Naive thymus-derived CD4-positive, alpha-beta T cell (primary cell): ENCODE measurements at regions of chr17 and their contacts with region 1.

Region 1: DNA sequence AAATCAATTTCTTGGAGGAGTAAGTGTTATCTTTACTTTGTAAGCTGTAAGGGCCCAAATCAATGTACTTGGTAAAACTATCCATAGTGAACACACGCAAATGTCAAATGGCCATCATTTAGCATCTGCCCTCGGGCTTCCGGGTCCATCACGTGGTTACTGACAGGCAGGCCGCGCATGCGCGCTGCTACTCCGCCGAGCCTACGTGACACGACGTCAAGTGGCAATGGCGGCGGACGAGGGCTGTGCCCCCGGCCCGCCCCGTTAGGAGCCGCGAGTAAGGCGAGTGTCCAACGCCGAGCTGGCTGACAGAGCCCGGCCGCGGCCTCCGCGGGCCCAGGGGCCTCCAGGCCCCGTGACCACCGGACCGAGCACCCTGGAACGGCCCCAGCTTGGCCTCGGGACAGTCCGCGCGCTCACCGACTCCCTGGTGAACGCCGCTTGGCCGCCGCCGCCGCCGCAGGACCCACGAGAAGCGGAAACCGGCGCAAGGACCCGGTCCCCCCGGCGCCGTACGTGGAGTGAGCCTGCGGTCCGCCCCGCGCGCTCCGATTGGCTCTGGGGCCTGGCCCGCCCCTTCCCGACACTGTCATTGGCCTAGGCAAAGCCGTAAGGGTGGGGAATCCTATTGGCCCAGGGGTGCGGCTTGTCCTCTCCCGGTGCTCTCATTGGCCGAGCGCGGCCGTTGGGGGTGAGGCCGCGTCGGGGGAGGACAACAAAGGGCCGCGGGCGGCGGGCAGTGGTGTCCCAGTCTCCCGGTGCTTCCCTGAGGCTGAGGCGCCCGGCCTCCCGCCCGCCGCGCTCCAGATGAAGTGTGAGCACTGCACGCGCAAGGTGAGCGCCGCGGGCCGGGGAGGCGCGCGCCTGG is at the start of gene NARF:
- DNase-seq: peak; percentile 89 to 97 (median 97)
- ATAC-seq: peak; percentile 98
- H3K4me3 ChIP-seq: peak within 1 kb of the TSS; percentile 75
- H3K4me3 Mint-ChIP-seq: peak within 1 kb of the TSS; percentile 85 to 94 (median 88)
- H3K27ac ChIP-seq: peak within 1 kb of the TSS; percentile 97
- H3K27ac Mint-ChIP-seq: peak within 1 kb of the TSS; percentile 96 to 99 (median 98)
- H3K4me1 ChIP-seq: peaks cover 20% of the 10 kb centered on the region in 2 donors
- H3K4me1 Mint-ChIP-seq: peaks cover 22 to 47% (median 30%) of the 10 kb centered on the region in 7 donors
- H3K27me3 ChIP-seq: no peaks in the 10 kb centered on the region
- H3K27me3 Mint-ChIP-seq: no peaks in the 10 kb centered on the region
- total RNA-seq, gene NARF: 59.8 to 188 (median 67.1) TPM

Region 2: DNA sequence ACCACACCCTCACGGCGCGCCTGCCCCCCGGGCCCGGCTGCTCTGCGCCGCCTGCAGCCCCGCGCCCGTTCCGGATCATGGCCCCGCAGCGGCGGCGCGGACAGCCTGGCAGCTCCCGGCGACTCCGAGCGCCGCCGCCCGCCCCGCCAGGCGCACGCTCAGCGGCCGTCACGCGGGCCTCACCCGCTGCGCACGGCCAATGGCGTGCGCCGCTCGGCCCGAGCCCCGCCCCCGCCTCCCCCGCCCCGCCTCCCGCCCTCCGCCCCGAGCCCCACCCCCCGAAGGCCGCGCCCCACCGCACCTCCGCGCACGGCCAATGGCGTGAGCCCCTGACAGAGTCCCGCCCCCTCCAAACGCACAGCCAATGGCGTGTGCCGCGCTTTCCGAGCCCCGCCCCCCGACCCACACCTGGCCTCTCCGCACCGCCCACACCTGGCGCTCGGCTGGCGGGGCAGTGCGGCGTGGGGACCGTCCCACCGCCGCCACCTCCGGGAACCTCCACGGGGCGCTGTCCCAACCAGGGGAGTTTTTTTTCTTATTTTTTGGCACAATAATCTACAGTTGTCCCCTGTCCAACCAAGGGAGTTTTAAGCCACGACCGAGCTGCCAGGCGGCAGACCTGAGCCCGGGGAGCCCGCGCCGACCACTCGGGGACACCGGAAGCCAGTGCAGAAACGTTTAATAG is 546.8 kb before region 1 on chr17 and contains the start of gene PCYT2:
- CTCF ChIA-PET with region 1: no interaction called
- POLR2A ChIA-PET with region 1: no interaction called
- intact Hi-C with region 1: loop called in 1 of 2 experiments (anchors 5 kb)
- DNase-seq: peak; percentile 84 to 95 (median 92)
- ATAC-seq: peak; percentile 97
- H3K4me3 ChIP-seq: peak within 1 kb of the TSS; percentile 70
- H3K4me3 Mint-ChIP-seq: peak within 1 kb of the TSS; percentile 72 to 92 (median 86)
- H3K27ac ChIP-seq: peak within 1 kb of the TSS; percentile 68
- H3K27ac Mint-ChIP-seq: peak within 1 kb of the TSS in 6 of 9 donors; percentile 33 to 85 (median 54)
- H3K4me1 ChIP-seq: peaks cover 8 to 12% of the 10 kb centered on the region in 2 donors
- H3K4me1 Mint-ChIP-seq: peaks cover 6 to 33% (median 16%) of the 10 kb centered on the region in 7 donors
- H3K27me3 ChIP-seq: no peaks in the 10 kb centered on the region
- H3K27me3 Mint-ChIP-seq: no peaks in the 10 kb centered on the region
- total RNA-seq, gene PCYT2: 17.5 to 43.6 (median 35.2) TPM

Region 3: GRCh38 chr17:82292251-82293154 is 165.7 kb before region 1 on chr17:
- CTCF ChIA-PET with region 1: no interaction called
- POLR2A ChIA-PET with region 1: interaction called, 4 read pairs
- intact Hi-C with region 1: loop called in 1 of 2 experiments (anchors 1 kb)
- DNase-seq: peak; percentile 76 to 94 (median 91)
- ATAC-seq: peak; percentile 95
- H3K4me3 ChIP-seq: peak overlapping the region; percentile 72
- H3K4me3 Mint-ChIP-seq: peak overlapping the region; percentile 83 to 94 (median 91)
- H3K27ac ChIP-seq: peak overlapping the region; percentile 99
- H3K27ac Mint-ChIP-seq: peak overlapping the region; percentile 86 to 96 (median 92)
- H3K4me1 ChIP-seq: peaks cover 18 to 21% of the 10 kb centered on the region in 2 donors
- H3K4me1 Mint-ChIP-seq: peaks cover 14 to 54% (median 43%) of the 10 kb centered on the region in 7 donors
- H3K27me3 ChIP-seq: no peaks in the 10 kb centered on the region
- H3K27me3 Mint-ChIP-seq: no peaks in the 10 kb centered on the region

Region 4: DNA sequence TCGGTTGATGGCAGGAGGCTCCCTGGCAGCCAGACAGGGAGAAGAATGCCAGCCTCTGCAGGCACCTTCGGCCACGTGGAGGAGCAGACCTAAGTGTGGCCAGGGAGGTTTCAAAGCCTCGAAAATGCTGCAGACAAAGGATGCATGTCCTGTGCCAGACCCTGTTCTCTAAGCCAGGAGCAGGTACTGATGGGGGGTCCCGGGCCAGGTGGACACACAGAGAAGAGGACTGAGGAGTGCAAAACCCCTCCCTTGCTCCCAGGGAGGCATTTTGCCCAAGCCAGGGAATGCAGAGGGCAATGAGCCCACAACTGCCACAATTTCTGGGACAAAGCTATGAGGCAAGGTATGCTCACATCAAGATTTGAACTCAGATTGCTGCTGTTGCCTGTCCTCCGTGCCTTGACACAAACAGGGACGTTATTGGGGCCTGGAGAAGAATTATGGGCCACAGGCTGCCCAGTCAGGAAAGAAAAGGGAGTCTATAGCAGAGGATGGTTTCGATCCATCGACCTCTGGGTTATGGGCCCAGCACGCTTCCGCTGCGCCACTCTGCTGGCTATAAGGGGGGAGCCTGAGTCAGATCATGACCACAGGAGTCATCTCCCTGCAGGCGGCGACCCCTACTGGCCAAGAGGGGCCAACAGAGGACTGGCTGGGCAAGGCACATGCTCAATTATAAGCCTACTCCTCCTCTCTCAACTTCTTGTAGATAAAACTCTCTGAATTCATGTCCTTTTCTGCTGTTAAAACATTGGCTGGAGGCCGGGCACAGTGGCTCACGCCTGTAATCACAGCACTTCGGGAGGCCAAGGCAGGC is 36.2 kb after region 1 on chr17:
- CTCF ChIA-PET with region 1: no interaction called
- POLR2A ChIA-PET with region 1: interaction called, 5 read pairs
- intact Hi-C with region 1: loop called (anchors 1 kb)
- DNase-seq: peak; percentile 68 to 92 (median 80)
- ATAC-seq: peak; percentile 80
- H3K4me3 ChIP-seq: no peak overlapping the region
- H3K4me3 Mint-ChIP-seq: peak overlapping the region in 9 of 10 donors; percentile 14 to 84 (median 65)
- H3K27ac ChIP-seq: peak overlapping the region; percentile 28
- H3K27ac Mint-ChIP-seq: peak overlapping the region; percentile 77 to 94 (median 87)
- H3K4me1 ChIP-seq: peaks cover 0 to 9% of the 10 kb centered on the region in 2 donors
- H3K4me1 Mint-ChIP-seq: peaks cover 8 to 33% (median 25%) of the 10 kb centered on the region in 7 donors
- H3K27me3 ChIP-seq: no peaks in the 10 kb centered on the region
- H3K27me3 Mint-ChIP-seq: peaks cover 0 to 2% (median 0%) of the 10 kb centered on the region in 5 donors

Region 5: GRCh38 chr17:82528484-82529265 is 70.4 kb after region 1 on chr17:
- CTCF ChIA-PET with region 1: no interaction called
- POLR2A ChIA-PET with region 1: no interaction called
- intact Hi-C with region 1: no loop called
- DNase-seq: no peak
- ATAC-seq: peak; percentile 80
- H3K4me3 ChIP-seq: no peak overlapping the region
- H3K4me3 Mint-ChIP-seq: peak overlapping the region in 9 of 10 donors; percentile 20 to 63 (median 47)
- H3K27ac ChIP-seq: no peak overlapping the region
- H3K27ac Mint-ChIP-seq: peak overlapping the region; percentile 22 to 70 (median 58)
- H3K4me1 ChIP-seq: peaks cover 22 to 27% of the 10 kb centered on the region in 2 donors
- H3K4me1 Mint-ChIP-seq: peaks cover 46 to 70% (median 58%) of the 10 kb centered on the region in 7 donors
- H3K27me3 ChIP-seq: no peaks in the 10 kb centered on the region
- H3K27me3 Mint-ChIP-seq: no peaks in the 10 kb centered on the region

Region 6: GRCh38 chr17:82551779-82552457 is 93.7 kb after region 1 on chr17:
- CTCF ChIA-PET with region 1: no interaction called
- POLR2A ChIA-PET with region 1: no interaction called
- intact Hi-C with region 1: loop called (anchors 1 to 2 kb)
- DNase-seq: peak; percentile 61 to 83 (median 77)
- ATAC-seq: peak; percentile 99
- H3K4me3 ChIP-seq: no peak overlapping the region
- H3K4me3 Mint-ChIP-seq: peak overlapping the region in 3 of 10 donors; percentile 13 to 64 (median 27)
- H3K27ac ChIP-seq: no peak overlapping the region
- H3K27ac Mint-ChIP-seq: peak overlapping the region in 8 of 9 donors; percentile 32 to 86 (median 81)
- H3K4me1 ChIP-seq: peaks cover 3 to 18% of the 10 kb centered on the region in 2 donors
- H3K4me1 Mint-ChIP-seq: peaks cover 28 to 52% (median 37%) of the 10 kb centered on the region in 7 donors
- H3K27me3 ChIP-seq: no peaks in the 10 kb centered on the region
- H3K27me3 Mint-ChIP-seq: no peaks in the 10 kb centered on the region

Region 7: GRCh38 chr17:82698065-82698973 is 240.1 kb after region 1 on chr17 and contains the start of gene RAB40B:
- CTCF ChIA-PET with region 1: no interaction called
- POLR2A ChIA-PET with region 1: no interaction called
- intact Hi-C with region 1: loop called in 1 of 2 experiments (anchors 1 kb)
- DNase-seq: peak; percentile 94 to 99 (median 99)
- ATAC-seq: peak; percentile 98
- H3K4me3 ChIP-seq: peak within 1 kb of the TSS; percentile 83
- H3K4me3 Mint-ChIP-seq: peak within 1 kb of the TSS; percentile 83 to 96 (median 89)
- H3K27ac ChIP-seq: peak within 1 kb of the TSS; percentile 61
- H3K27ac Mint-ChIP-seq: peak within 1 kb of the TSS in 6 of 9 donors; percentile 33 to 87 (median 76)
- H3K4me1 ChIP-seq: peaks cover 5 to 8% of the 10 kb centered on the region in 2 donors
- H3K4me1 Mint-ChIP-seq: peaks cover 0 to 16% (median 7%) of the 10 kb centered on the region in 7 donors
- H3K27me3 ChIP-seq: no peaks in the 10 kb centered on the region
- H3K27me3 Mint-ChIP-seq: peaks cover 0 to 16% (median 0%) of the 10 kb centered on the region in 5 donors
- total RNA-seq, gene RAB40B: 2.8 to 6.1 (median 3.6) TPM

Region 8: GRCh38 chr17:83051395-83052233 is 593.4 kb after region 1 on chr17:
- CTCF ChIA-PET with region 1: no interaction called
- POLR2A ChIA-PET with region 1: no interaction called
- intact Hi-C with region 1: loop called in 1 of 2 experiments (anchors 5 kb)
- DNase-seq: peak; percentile 97 to 100 (median 99)
- ATAC-seq: peak; percentile 94
- H3K4me3 ChIP-seq: peak overlapping the region; percentile 75
- H3K4me3 Mint-ChIP-seq: peak overlapping the region; percentile 68 to 91 (median 83)
- H3K27ac ChIP-seq: peak overlapping the region; percentile 91
- H3K27ac Mint-ChIP-seq: peak overlapping the region; percentile 56 to 94 (median 89)
- H3K4me1 ChIP-seq: peaks cover 22 to 26% of the 10 kb centered on the region in 2 donors
- H3K4me1 Mint-ChIP-seq: peaks cover 17 to 39% (median 20%) of the 10 kb centered on the region in 7 donors
- H3K27me3 ChIP-seq: no peaks in the 10 kb centered on the region
- H3K27me3 Mint-ChIP-seq: no peaks in the 10 kb centered on the region